CD8-positive, alpha-beta T cell (primary cell): ENCODE measurements at regions of chr18 and their contacts with region 1.

Region 1: GRCh38 chr18:28916456-28916855 is 739.5 kb upstream of the CDH2 start:
- DNase-seq: no peak
- ATAC-seq: no peak
- H3K4me3 ChIP-seq: no peak overlapping the region
- H3K4me3 Mint-ChIP-seq: no peak overlapping the region
- H3K27ac ChIP-seq: no peak overlapping the region
- H3K27ac Mint-ChIP-seq: no peak overlapping the region
- H3K4me1 ChIP-seq: no peaks in the 10 kb centered on the region
- H3K4me1 Mint-ChIP-seq: no peaks in the 10 kb centered on the region
- H3K27me3 ChIP-seq: no peaks in the 10 kb centered on the region
- H3K27me3 Mint-ChIP-seq: no peaks in the 10 kb centered on the region
- CTCF ChIP-seq: no peak

Region 2: GRCh38 chr18:28716333-28716732 is 200.1 kb before region 1 on chr18:
- CTCF ChIA-PET with region 1: no interaction called
- POLR2A ChIA-PET with region 1: no interaction called
- intact Hi-C with region 1: loop called in 1 of 2 experiments (anchors 10 kb)
- DNase-seq: no peak
- ATAC-seq: no peak
- H3K4me3 ChIP-seq: no peak overlapping the region
- H3K4me3 Mint-ChIP-seq: no peak overlapping the region
- H3K27ac ChIP-seq: no peak overlapping the region
- H3K27ac Mint-ChIP-seq: no peak overlapping the region
- H3K4me1 ChIP-seq: no peaks in the 10 kb centered on the region
- H3K4me1 Mint-ChIP-seq: no peaks in the 10 kb centered on the region
- H3K27me3 ChIP-seq: no peaks in the 10 kb centered on the region
- H3K27me3 Mint-ChIP-seq: no peaks in the 10 kb centered on the region
- CTCF ChIP-seq: no peak

Region 3: GRCh38 chr18:28961669-28962228 is 45.3 kb after region 1 on chr18:
- CTCF ChIA-PET with region 1: no interaction called
- POLR2A ChIA-PET with region 1: no interaction called
- intact Hi-C with region 1: loop called in 1 of 2 experiments (anchors 5 kb)
- DNase-seq: peak in 1 of 9 experiments; percentile 2
- ATAC-seq: no peak
- H3K4me3 ChIP-seq: no peak overlapping the region
- H3K4me3 Mint-ChIP-seq: no peak overlapping the region
- H3K27ac ChIP-seq: no peak overlapping the region
- H3K27ac Mint-ChIP-seq: no peak overlapping the region
- H3K4me1 ChIP-seq: no peaks in the 10 kb centered on the region
- H3K4me1 Mint-ChIP-seq: no peaks in the 10 kb centered on the region
- H3K27me3 ChIP-seq: no peaks in the 10 kb centered on the region
- H3K27me3 Mint-ChIP-seq: no peaks in the 10 kb centered on the region
- CTCF ChIP-seq: no peak